ENCODE measurements at regions of chr5 and their contacts with region 1.

Region 1: GRCh38 chr5:34007621-34008600 is at the start of gene AMACR:
- DNase-seq: peak; percentile 67
- ATAC-seq: peak; percentile 93
- H3K4me3 ChIP-seq: peak within 1 kb of the TSS; percentile 70
- H3K27ac ChIP-seq: peak within 1 kb of the TSS; percentile 81
- H3K4me1 ChIP-seq: peaks cover 4% of the 10 kb centered on the region; the same call in 1 of the 2 replicates
- H3K27me3 ChIP-seq: no peaks in the 10 kb centered on the region
- CTCF ChIP-seq: peak in 2 of 3 experiments; percentile 13 to 15; a peak in 2 of 6 replicates
- EP300 ChIP-seq: no peak
- POLR2A ChIP-seq: peak; percentile 95
- RAD21 ChIP-seq: no peak
- polyA plus RNA-seq, gene AMACR: 2.6 to 4.0 TPM

Region 2: GRCh38 chr5:33509036-33509435 is 498.9 kb before region 1 on chr5:
- CTCF ChIA-PET with region 1: no interaction called
- POLR2A ChIA-PET with region 1: no interaction called
- RAD21 ChIA-PET with region 1: no interaction called
- SMC1A ChIA-PET with region 1: no interaction called
- in situ Hi-C with region 1: no loop called
- intact Hi-C with region 1: no loop called
- DNase-seq: no peak
- ATAC-seq: no peak
- H3K4me3 ChIP-seq: no peak overlapping the region
- H3K27ac ChIP-seq: no peak overlapping the region
- H3K4me1 ChIP-seq: no peaks in the 10 kb centered on the region
- H3K27me3 ChIP-seq: no peaks in the 10 kb centered on the region
- CTCF ChIP-seq: no peak
- EP300 ChIP-seq: no peak
- POLR2A ChIP-seq: no peak
- RAD21 ChIP-seq: no peak

Region 3: DNA sequence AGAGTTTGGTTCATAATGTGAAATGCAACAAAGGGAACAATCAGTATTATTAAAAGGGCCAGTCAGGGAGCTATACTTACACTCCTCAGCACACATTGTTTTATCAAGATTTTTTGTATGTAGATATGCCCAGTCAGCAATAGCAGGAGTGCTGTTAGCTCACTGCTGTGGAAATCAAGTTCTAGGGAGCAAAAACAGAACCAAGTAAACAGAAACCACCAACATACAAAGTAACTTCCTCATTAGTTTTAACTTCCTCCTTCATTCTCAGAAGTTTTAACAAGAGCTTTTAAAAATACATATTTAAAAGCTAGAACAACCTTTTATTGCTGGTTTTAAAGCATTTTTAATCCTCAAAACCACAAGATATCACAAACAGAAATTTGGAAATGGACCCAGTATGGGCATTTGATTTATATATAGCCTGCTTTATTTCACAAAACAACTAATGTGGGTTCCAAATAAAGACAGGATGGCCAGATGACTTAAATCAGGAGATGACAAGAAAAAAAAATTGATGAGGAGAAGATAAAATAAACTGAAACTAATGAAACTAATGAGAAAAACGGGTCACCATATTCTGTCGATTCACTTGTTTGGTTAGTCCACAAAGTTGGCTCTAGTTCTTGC is 294.7 kb before region 1 on chr5:
- CTCF ChIA-PET with region 1: no interaction called
- POLR2A ChIA-PET with region 1: no interaction called
- RAD21 ChIA-PET with region 1: no interaction called
- SMC1A ChIA-PET with region 1: no interaction called
- in situ Hi-C with region 1: no loop called
- intact Hi-C with region 1: no loop called
- DNase-seq: peak; percentile 30
- ATAC-seq: peak; percentile 72
- H3K4me3 ChIP-seq: no peak overlapping the region
- H3K27ac ChIP-seq: peak overlapping the region; percentile 38
- H3K4me1 ChIP-seq: peaks cover 12% of the 10 kb centered on the region; the same call in 1 of the 2 replicates
- H3K27me3 ChIP-seq: no peaks in the 10 kb centered on the region
- CTCF ChIP-seq: no peak
- EP300 ChIP-seq: no peak
- POLR2A ChIP-seq: no peak
- RAD21 ChIP-seq: no peak

Region 4: GRCh38 chr5:33997331-33997983 is 10.5 kb before region 1 on chr5:
- CTCF ChIA-PET with region 1: interaction called, 40 read pairs
- POLR2A ChIA-PET with region 1: interaction called, 6 read pairs
- RAD21 ChIA-PET with region 1: interaction called, 11 read pairs
- SMC1A ChIA-PET with region 1: interaction called, 8 read pairs
- in situ Hi-C with region 1: no loop called
- intact Hi-C with region 1: no loop called
- DNase-seq: no peak
- ATAC-seq: peak; percentile 90
- H3K4me3 ChIP-seq: no peak overlapping the region
- H3K27ac ChIP-seq: no peak overlapping the region
- H3K4me1 ChIP-seq: peaks cover 4% of the 10 kb centered on the region; the same call in 1 of the 2 replicates
- H3K27me3 ChIP-seq: no peaks in the 10 kb centered on the region
- CTCF ChIP-seq: peak; percentile 65 to 69 (median 66)
- EP300 ChIP-seq: no peak
- POLR2A ChIP-seq: no peak
- RAD21 ChIP-seq: peak; percentile 75

Region 5: GRCh38 chr5:34035756-34036155 is 27.8 kb after region 1 on chr5:
- CTCF ChIA-PET with region 1: no interaction called
- POLR2A ChIA-PET with region 1: interaction called, 13 read pairs
- RAD21 ChIA-PET with region 1: interaction called, 4 read pairs
- SMC1A ChIA-PET with region 1: interaction called, 4 read pairs
- in situ Hi-C with region 1: no loop called
- intact Hi-C with region 1: no loop called
- DNase-seq: no peak
- ATAC-seq: no peak
- H3K4me3 ChIP-seq: no peak overlapping the region
- H3K27ac ChIP-seq: no peak overlapping the region
- H3K4me1 ChIP-seq: peaks cover 3% of the 10 kb centered on the region; the same call in 1 of the 2 replicates
- H3K27me3 ChIP-seq: no peaks in the 10 kb centered on the region
- CTCF ChIP-seq: no peak
- EP300 ChIP-seq: no peak
- POLR2A ChIP-seq: no peak
- RAD21 ChIP-seq: no peak

Region 6: GRCh38 chr5:34915139-34915855 is 907.4 kb after region 1 on chr5 and contains the starts of genes BRIX1 and RAD1:
- CTCF ChIA-PET with region 1: no interaction called
- POLR2A ChIA-PET with region 1: no interaction called
- RAD21 ChIA-PET with region 1: no interaction called
- SMC1A ChIA-PET with region 1: no interaction called
- in situ Hi-C with region 1: loop called (anchors 25 kb)
- intact Hi-C with region 1: loop called (anchors 10 kb)
- DNase-seq: peak; percentile 86
- ATAC-seq: peak; percentile 96
- H3K4me3 ChIP-seq: peak within 1 kb of the TSS; percentile 100
- H3K27ac ChIP-seq: peak within 1 kb of the TSS; percentile 90
- H3K4me1 ChIP-seq: peaks cover 6% of the 10 kb centered on the region; the same call in 1 of the 2 replicates
- H3K27me3 ChIP-seq: no peaks in the 10 kb centered on the region
- CTCF ChIP-seq: peak in 2 of 3 experiments; percentile 12 to 43; a peak in 3 of 6 replicates
- EP300 ChIP-seq: 0 out of 4 replicates have a peak, but pooled peaks of 1 of the 2 experiments have one; percentile 35
- POLR2A ChIP-seq: peak; percentile 90
- RAD21 ChIP-seq: no peak
- polyA plus RNA-seq, gene BRIX1: 58.2 to 77.4 TPM
- polyA plus RNA-seq, gene RAD1: 43.4 to 58.4 TPM

Region 7: DNA sequence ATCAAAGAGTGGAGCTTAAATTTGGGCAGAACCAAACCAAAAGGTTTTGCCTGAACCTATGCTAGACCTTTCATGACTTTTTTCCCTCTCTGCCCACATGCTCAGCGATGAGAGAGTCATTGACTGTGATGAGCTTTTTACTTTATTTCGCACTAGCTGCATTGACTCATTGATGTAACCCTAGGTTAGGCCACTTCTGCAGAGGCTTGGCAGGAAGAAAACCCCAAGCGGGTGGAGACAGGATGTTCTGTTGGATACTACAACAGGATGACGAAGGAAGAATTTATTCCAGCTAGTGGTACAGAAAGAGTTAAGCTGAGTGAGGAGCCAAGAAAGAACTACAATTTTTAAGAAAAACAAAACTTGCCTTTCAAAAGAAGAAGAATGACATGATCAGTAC is 1021.4 kb after region 1 on chr5:
- CTCF ChIA-PET with region 1: no interaction called
- POLR2A ChIA-PET with region 1: no interaction called
- RAD21 ChIA-PET with region 1: no interaction called
- SMC1A ChIA-PET with region 1: no interaction called
- in situ Hi-C with region 1: no loop called
- intact Hi-C with region 1: no loop called
- DNase-seq: no peak
- ATAC-seq: peak; percentile 56
- H3K4me3 ChIP-seq: no peak overlapping the region
- H3K27ac ChIP-seq: no peak overlapping the region
- H3K4me1 ChIP-seq: no peaks in the 10 kb centered on the region
- H3K27me3 ChIP-seq: peaks cover 0 to 2% of the 10 kb centered on the region in 2 experiments; a peak in 2 of 4 replicates
- CTCF ChIP-seq: no peak
- EP300 ChIP-seq: no peak
- POLR2A ChIP-seq: no peak
- RAD21 ChIP-seq: no peak

Measured in GM12878 (cell line).